ENCODE measurements at regions of chr14 and their contacts with region 1.

Region 1: DNA sequence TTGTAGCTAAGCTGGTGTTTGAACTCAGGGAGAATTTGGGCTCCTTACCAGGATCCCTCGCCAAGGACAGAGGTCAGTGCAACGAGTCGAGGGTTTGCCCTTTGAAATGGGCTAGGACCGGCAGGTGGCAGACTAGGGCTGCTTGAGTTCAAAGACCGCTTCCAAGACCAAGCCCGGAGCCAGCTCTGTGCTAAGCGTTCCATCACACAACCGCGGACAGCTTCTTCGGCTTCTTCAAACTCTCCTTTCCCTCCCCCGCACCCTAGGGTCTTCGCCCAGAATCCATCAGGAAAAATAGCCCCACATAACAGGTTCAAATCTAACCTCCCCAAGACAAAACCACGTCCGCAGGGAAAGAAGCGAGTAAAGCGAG is 705 bp upstream of the FLVCR2 start:
- DNase-seq: no peak
- H3K4me3 ChIP-seq: peak overlapping the region; percentile 49
- H3K27me3 ChIP-seq: 0 out of 2 replicates have a peak, but pooled peaks cover 2% of the 10 kb centered on the region
- CTCF ChIP-seq: peak; percentile 85

Region 2: GRCh38 chr14:75440733-75441477 is 136.8 kb before region 1 on chr14:
- CTCF ChIA-PET with region 1: no interaction called
- POLR2A ChIA-PET with region 1: no interaction called
- DNase-seq: peak; percentile 50
- H3K4me3 ChIP-seq: no peak overlapping the region
- H3K27me3 ChIP-seq: no peaks in the 10 kb centered on the region
- CTCF ChIP-seq: no peak

Region 3: DNA sequence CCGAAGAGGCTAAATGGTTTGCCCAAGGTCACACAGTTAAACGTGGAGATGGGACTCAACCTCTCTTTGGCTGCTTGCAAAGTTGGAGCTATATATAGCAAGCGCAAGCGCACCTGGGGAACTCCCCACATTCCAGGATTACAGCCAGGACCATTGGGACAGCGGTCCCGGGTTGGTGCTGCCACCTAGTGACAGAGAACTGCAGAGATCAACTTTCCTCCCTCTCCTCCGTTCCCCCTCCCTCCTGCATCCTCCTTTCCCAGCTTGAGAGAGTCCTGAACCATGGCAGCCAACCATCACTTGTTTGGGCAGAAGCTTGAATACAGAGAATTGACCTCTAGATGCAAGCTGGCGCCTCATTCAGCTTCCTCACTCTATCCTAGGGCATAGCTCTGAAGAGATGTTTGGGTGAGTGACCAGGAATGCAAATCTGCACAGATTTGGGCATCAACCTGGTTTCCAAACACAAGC is 16.7 kb before region 1 on chr14:
- CTCF ChIA-PET with region 1: interaction called, 104 read pairs
- POLR2A ChIA-PET with region 1: interaction called, 3 read pairs
- DNase-seq: no peak
- H3K4me3 ChIP-seq: no peak overlapping the region
- H3K27me3 ChIP-seq: peaks cover 5% of the 10 kb centered on the region
- CTCF ChIP-seq: peak; percentile 90

Region 4: GRCh38 chr14:75636100-75636692 is 58.5 kb after region 1 on chr14:
- CTCF ChIA-PET with region 1: interaction called, 17 read pairs
- POLR2A ChIA-PET with region 1: no interaction called
- DNase-seq: peak; percentile 30
- H3K4me3 ChIP-seq: no peak overlapping the region
- H3K27me3 ChIP-seq: no peaks in the 10 kb centered on the region; the same call in 1 of the 2 replicates
- CTCF ChIP-seq: no peak

Region 5: DNA sequence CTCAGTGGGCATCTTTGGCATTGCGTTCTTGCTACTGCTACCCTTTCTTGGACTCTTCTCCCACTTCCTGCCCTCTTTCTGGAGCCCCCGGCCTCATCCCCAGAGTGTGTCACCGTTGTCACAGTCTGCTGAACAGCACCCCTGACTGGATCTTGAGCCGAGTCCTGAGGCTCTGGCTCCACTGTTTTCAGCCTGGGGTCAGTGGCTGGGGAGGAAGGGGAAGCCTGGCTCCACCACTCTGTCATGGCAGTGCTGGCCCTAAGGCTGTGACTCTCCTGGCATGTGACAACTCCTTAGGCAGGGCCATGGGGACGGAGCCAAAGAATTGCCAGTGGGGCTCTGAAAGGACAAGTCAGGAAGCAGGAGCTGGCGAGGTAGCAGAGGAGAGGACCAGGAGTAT is 64.3 kb after region 1 on chr14:
- CTCF ChIA-PET with region 1: interaction called, 480 read pairs
- POLR2A ChIA-PET with region 1: no interaction called
- DNase-seq: no peak
- H3K4me3 ChIP-seq: no peak overlapping the region
- H3K27me3 ChIP-seq: no peaks in the 10 kb centered on the region
- CTCF ChIP-seq: no peak

Region 6: DNA sequence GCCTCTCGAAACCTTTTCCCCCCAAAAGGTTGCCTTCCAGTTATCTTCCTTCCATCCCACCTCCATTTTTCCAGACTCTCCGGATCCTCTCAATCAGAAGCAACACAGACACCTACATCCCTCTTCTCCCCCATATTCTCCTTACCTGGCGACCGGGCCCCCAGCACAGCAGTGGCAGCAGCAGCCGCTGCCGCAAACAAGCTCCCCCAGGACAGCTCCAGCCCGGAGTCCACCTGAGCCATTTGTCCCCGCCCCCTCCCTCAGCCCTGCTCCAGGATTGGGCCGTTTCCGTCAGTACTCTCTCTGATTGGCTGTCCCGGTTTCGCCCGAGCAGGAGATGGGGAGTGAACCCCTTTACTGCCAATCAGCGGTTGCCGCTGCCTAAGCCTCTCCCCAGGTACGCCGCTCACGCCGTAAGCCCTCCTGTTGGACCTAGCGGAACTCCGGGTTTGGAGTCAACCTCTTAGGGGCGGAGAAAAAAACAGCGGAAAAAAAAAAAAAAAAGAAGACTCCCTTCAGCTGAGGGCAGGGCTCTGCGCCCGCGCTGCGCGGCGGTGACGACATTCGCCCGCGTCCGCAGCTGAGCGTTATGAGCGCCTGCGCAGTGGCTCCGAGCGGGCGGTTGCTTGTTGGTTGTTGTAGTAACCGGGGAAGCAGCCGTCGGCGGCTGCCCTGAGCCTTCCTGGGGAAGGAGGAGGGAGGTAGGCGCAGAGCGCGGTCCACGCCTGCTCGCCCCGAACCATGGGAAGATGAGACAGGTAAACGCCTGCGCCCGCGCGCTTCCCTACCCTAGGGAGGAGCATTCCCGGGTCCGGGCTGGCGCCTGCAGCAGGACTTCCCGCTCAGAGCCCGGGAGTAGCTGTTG is 83.1 kb after region 1 on chr14 and contains the starts of genes ERG28 and TTLL5:
- CTCF ChIA-PET with region 1: interaction called, 480 read pairs
- POLR2A ChIA-PET with region 1: no interaction called
- DNase-seq: peak; percentile 95
- H3K4me3 ChIP-seq: peak within 1 kb of the TSS; percentile 93
- H3K27me3 ChIP-seq: no peaks in the 10 kb centered on the region
- CTCF ChIP-seq: no peak
- polyA plus RNA-seq, gene ERG28: 22.9 and 23.7 TPM in 2 replicates
- polyA plus RNA-seq, gene TTLL5: 9.9 and 12.3 TPM in 2 replicates

Measured in BJ (cell line).